ENCODE measurements at regions of chr2 and their contacts with region 1.

Region 1: DNA sequence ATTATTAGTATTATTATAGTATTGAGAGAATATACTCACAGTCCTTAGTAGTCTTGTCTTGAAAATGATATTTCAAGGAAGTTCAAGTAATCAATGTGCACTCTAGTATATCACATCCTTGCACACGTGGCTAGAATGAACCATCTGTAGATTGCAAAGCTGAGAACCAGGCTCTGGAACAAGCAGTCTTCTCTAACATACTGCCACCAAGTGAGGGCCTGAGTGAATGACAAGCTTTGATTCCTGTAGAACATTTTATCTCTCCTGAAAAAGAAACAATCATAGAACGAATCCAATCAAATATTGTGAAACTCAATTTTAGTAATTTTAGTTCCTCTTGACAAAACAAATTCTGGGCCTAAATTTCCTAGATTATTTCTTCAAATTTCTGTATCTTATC is 55.3 kb upstream of the SULT1C3 start:
- DNase-seq: no peak
- ATAC-seq: peak; percentile 71
- H3K4me3 ChIP-seq: no peak overlapping the region
- H3K27ac ChIP-seq: no peak overlapping the region
- H3K4me1 ChIP-seq: no peaks in the 10 kb centered on the region
- H3K27me3 ChIP-seq: no peaks in the 10 kb centered on the region
- CTCF ChIP-seq: peak; percentile 51 to 55 (median 52); a peak in 5 of 6 replicates
- EP300 ChIP-seq: no peak
- POLR2A ChIP-seq: no peak
- RAD21 ChIP-seq: peak; percentile 39

Region 2: GRCh38 chr2:106638043-106638442 is 1546.4 kb before region 1 on chr2:
- CTCF ChIA-PET with region 1: no interaction called
- POLR2A ChIA-PET with region 1: no interaction called
- RAD21 ChIA-PET with region 1: no interaction called
- SMC1A ChIA-PET with region 1: no interaction called
- in situ Hi-C with region 1: no loop called
- intact Hi-C with region 1: loop called (anchors 10 kb)
- DNase-seq: no peak
- ATAC-seq: no peak
- H3K4me3 ChIP-seq: no peak overlapping the region
- H3K27ac ChIP-seq: no peak overlapping the region
- H3K4me1 ChIP-seq: no peaks in the 10 kb centered on the region
- H3K27me3 ChIP-seq: no peaks in the 10 kb centered on the region
- CTCF ChIP-seq: peak in 1 of 3 experiments; percentile 26; a peak in 2 of 6 replicates
- EP300 ChIP-seq: no peak
- POLR2A ChIP-seq: no peak
- RAD21 ChIP-seq: 0 out of 2 replicates have a peak, but pooled peaks have one; percentile 21

Region 3: DNA sequence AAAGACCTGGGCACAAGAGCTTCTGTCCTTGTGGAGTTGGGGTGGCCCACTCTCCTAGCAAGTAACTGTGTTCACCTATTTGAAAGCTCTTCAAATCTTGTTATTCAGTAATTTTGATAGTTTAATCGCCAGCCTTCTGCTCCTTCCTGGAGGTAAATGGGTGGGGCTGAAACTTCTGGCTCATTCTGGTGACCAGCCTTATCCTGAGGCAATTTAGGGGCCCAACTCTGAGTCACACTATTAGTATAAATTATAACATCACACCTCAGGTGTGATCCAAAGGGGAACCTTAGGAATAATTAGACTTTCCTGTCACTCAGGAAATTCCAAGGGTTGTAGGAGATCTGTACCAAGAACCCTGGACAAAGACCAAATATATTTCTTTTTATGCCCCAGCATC is 613.5 kb before region 1 on chr2:
- CTCF ChIA-PET with region 1: no interaction called
- POLR2A ChIA-PET with region 1: no interaction called
- RAD21 ChIA-PET with region 1: no interaction called
- SMC1A ChIA-PET with region 1: no interaction called
- in situ Hi-C with region 1: no loop called
- intact Hi-C with region 1: loop called (anchors 10 kb)
- DNase-seq: no peak
- ATAC-seq: no peak
- H3K4me3 ChIP-seq: no peak overlapping the region
- H3K27ac ChIP-seq: no peak overlapping the region
- H3K4me1 ChIP-seq: no peaks in the 10 kb centered on the region
- H3K27me3 ChIP-seq: no peaks in the 10 kb centered on the region
- CTCF ChIP-seq: no peak
- EP300 ChIP-seq: no peak
- POLR2A ChIP-seq: no peak
- RAD21 ChIP-seq: no peak

Region 4: GRCh38 chr2:107936433-107937359 is 247.7 kb before region 1 on chr2:
- CTCF ChIA-PET with region 1: interaction called, 17 read pairs
- POLR2A ChIA-PET with region 1: no interaction called
- RAD21 ChIA-PET with region 1: interaction called, 3 read pairs
- SMC1A ChIA-PET with region 1: no interaction called
- in situ Hi-C with region 1: no loop called
- intact Hi-C with region 1: loop called (anchors 5 kb)
- DNase-seq: no peak
- ATAC-seq: no peak
- H3K4me3 ChIP-seq: no peak overlapping the region
- H3K27ac ChIP-seq: no peak overlapping the region
- H3K4me1 ChIP-seq: no peaks in the 10 kb centered on the region
- H3K27me3 ChIP-seq: no peaks in the 10 kb centered on the region
- CTCF ChIP-seq: peak; percentile 26 to 45 (median 38); a peak in 4 of 6 replicates
- EP300 ChIP-seq: no peak
- POLR2A ChIP-seq: no peak
- RAD21 ChIP-seq: peak; percentile 49

Region 5: GRCh38 chr2:108169982-108170625 is 14.3 kb before region 1 on chr2:
- CTCF ChIA-PET with region 1: interaction called, 10 read pairs
- POLR2A ChIA-PET with region 1: no interaction called
- RAD21 ChIA-PET with region 1: interaction called, 3 read pairs
- SMC1A ChIA-PET with region 1: interaction called, 3 read pairs
- in situ Hi-C with region 1: no loop called
- intact Hi-C with region 1: no loop called
- DNase-seq: no peak
- ATAC-seq: 0 out of 3 replicates have a peak, but pooled peaks have one; percentile 34
- H3K4me3 ChIP-seq: no peak overlapping the region
- H3K27ac ChIP-seq: no peak overlapping the region
- H3K4me1 ChIP-seq: no peaks in the 10 kb centered on the region
- H3K27me3 ChIP-seq: no peaks in the 10 kb centered on the region
- CTCF ChIP-seq: peak; percentile 33 to 43 (median 39); a peak in 4 of 6 replicates
- EP300 ChIP-seq: no peak
- POLR2A ChIP-seq: no peak
- RAD21 ChIP-seq: peak; percentile 35; the same call in 1 of the 2 replicates

Measured in GM12878 (cell line).